ENCODE measurements at regions of chr5 and their contacts with region 1.

Region 1: DNA sequence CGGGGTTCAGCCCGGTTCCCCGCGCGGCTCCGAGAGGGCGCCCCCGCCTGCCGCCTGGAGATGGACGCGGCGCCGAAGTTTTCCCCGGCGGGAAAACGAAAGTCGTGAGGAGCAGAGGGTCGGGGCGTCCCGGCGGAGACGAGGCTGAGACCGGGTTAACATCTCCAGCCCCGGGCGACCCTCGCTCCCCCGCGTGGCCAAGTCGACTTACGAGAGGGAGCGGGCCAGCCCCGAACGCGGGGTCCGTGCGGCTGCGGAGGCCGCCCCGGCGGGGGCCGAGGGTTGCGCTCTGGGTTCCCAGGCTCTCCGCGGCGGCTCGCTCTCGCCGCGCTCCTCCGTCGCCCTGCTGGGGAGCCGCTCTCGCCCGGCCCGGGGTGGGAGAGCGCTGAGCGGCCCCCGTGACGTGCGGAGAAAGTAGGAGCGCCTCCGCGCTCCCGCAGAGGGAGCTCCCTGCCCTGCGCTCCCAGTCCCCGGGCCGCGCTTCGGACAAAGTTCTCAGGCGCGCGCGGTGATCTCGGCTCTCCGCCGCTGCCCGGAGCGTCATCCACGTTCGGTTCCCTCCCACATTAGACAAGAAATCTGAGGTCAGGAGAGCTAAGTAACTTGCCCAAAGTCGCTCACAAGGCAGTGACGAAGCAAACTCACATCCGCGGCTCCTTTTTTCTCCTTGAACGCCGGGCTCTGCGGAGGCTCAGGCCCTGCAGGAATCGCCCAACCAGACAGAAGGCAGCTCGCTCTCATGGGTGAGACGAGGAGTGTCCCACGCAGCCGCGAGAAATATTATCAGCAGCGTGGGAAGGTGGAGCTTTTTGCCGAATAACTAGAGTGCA is 1.2 kb upstream of the GCNT4 start:
- DNase-seq: peak; percentile 43
- H3K4me3 Mint-ChIP-seq: peak overlapping the region; percentile 86
- H3K27ac Mint-ChIP-seq: peak overlapping the region; percentile 75
- H3K4me1 Mint-ChIP-seq: peaks cover 58% of the 10 kb centered on the region
- H3K27me3 Mint-ChIP-seq: peaks cover 19% of the 10 kb centered on the region

Region 2: DNA sequence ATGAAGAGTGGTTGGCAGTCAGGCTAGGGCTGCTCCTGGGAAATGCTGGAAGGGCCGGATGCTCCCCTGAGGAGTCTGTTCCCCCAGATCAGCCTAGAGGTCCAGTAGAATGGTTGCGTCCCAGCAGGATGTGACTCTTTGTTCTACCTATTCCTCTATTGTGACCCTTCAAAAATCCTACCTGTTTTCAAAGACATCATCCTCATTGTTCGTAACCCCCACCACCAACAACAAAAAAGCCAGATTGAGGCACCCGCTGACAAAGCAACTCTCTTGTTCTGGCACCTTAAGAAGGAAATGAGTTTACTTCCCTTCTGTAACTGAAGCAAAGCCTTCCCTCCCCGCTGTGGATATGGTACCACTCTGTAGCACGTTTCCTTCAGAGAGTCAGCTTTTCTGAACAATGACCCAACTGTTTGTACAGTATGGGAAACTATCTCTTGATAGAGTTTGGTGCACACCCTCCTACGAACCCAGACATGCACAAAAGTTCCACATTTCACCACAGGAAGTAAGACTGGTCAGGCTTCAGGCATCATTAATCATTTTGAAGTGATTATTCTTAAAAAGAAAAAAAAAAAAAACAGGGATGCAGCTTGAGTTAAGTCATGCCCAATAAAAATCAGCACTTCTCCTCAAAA is 620.1 kb before region 1 on chr5:
- intact Hi-C with region 1: no loop called
- DNase-seq: no peak
- H3K4me3 Mint-ChIP-seq: no peak overlapping the region
- H3K27ac Mint-ChIP-seq: no peak overlapping the region
- H3K4me1 Mint-ChIP-seq: no peaks in the 10 kb centered on the region
- H3K27me3 Mint-ChIP-seq: peaks cover 9% of the 10 kb centered on the region

Region 3: GRCh38 chr5:74684900-74685851 is 368.3 kb before region 1 on chr5 and contains the start of gene HEXB:
- intact Hi-C with region 1: loop called (anchors 10 kb)
- DNase-seq: peak; percentile 83
- H3K4me3 Mint-ChIP-seq: peak within 1 kb of the TSS; percentile 90
- H3K27ac Mint-ChIP-seq: peak within 1 kb of the TSS; percentile 71
- H3K4me1 Mint-ChIP-seq: peaks cover 23% of the 10 kb centered on the region
- H3K27me3 Mint-ChIP-seq: peaks cover 14% of the 10 kb centered on the region
- total RNA-seq, gene HEXB: 62.7 and 71.4 TPM in 2 replicates

Region 4: GRCh38 chr5:74934949-74935751 is 118.4 kb before region 1 on chr5:
- intact Hi-C with region 1: loop called (anchors 1 kb)
- DNase-seq: peak; percentile 29
- H3K4me3 Mint-ChIP-seq: peak overlapping the region; percentile 50
- H3K27ac Mint-ChIP-seq: peak overlapping the region; percentile 42
- H3K4me1 Mint-ChIP-seq: peaks cover 38% of the 10 kb centered on the region
- H3K27me3 Mint-ChIP-seq: peaks cover 2% of the 10 kb centered on the region

Region 5: GRCh38 chr5:75236322-75237316 is 183.1 kb after region 1 on chr5 and contains the start of gene ANKRD31:
- intact Hi-C with region 1: loop called (anchors 1 kb)
- DNase-seq: peak; percentile 86
- H3K4me3 Mint-ChIP-seq: peak within 1 kb of the TSS; percentile 90
- H3K27ac Mint-ChIP-seq: peak within 1 kb of the TSS; percentile 97
- H3K4me1 Mint-ChIP-seq: peaks cover 15% of the 10 kb centered on the region
- H3K27me3 Mint-ChIP-seq: peaks cover 6% of the 10 kb centered on the region
- total RNA-seq, gene ANKRD31: 0.36 and 0.37 TPM in 2 replicates

Region 6: DNA sequence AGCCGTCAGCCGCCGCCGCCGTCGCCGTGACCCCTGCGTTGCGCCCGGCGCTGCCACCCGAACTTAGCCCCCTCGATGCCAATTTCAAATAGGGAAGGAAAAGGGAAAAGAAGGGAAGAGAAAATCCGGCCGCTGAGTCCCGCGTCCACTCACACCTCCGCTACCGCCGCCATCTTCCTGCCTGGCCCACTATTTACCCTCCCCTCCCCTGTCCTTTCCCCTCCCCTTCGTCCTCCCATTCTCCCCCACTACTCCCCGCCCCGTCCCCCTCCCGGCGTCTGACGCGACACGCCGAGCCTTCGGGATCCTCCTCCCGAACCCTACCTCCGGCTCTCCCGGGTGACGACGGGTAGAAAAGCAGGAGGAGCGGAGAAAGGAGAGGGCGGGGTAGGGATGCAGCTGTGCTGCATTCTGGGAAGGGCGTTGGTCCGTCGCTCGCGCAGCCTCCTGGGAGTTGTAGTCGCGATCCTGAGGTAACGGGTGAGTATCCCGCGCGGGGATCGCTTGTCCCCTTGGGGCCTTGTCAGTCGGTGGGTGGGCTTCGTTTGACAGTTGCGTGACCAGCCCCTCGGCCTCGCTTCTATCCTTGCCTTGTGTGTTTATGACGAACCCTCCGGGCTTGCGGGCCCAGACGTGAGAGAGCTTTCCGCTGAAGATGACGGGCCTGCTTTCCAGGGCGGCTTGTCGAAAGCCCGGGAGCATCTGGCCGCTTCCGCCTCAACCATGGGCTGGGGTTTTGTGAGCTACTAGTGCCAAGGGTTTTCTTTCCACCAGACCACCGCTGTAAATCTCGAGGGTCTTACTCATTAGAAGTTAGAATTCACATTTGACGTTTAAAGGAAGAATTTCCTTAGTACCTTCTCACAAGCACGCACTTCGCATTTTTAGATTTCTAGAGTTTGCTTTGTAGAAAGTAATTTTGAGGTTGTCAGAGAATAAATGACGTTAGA is 458.2 kb after region 1 on chr5 and contains the starts of genes CERT1 and POLK:
- intact Hi-C with region 1: loop called (anchors 5 kb)
- DNase-seq: peak; percentile 96
- H3K4me3 Mint-ChIP-seq: peak within 1 kb of the TSS; percentile 99
- H3K27ac Mint-ChIP-seq: peak within 1 kb of the TSS; percentile 93
- H3K4me1 Mint-ChIP-seq: peaks cover 62% of the 10 kb centered on the region
- H3K27me3 Mint-ChIP-seq: no peaks in the 10 kb centered on the region
- total RNA-seq, gene CERT1: 41.0 and 43.4 TPM in 2 replicates
- total RNA-seq, gene POLK: 38.0 and 40.4 TPM in 2 replicates

Region 7: DNA sequence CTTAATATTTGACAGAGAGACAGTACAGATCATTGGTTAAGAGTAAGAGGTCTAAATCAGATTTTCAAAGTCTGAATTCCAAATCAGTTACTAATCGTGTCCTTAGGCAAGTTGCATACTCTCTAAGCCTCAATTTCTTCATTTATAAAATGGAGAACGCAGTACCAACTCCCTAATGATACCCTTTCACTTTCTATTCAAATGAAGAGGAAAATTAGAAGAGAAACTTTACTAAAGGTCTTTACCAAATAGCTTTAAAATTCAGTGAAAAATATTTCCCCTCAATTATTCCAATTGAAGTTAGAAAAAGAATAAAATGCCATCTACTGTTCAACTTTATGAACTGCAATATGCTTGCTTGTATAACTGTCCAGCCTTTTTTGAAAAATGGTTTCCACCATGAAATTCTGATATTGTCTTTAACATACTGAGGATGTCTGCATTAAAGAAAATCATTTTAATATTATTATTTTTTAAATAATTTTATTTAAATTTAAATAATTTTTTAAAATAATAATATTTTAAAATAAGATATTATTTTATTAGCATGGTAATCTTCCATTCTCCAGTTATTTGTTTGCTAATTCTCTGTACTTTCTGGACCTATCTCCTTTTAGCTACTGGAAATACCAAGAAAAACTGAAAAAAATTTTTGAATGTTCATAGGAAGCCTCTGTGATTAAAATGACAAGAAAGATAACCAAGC is 627.8 kb after region 1 on chr5:
- intact Hi-C with region 1: loop called (anchors 1 kb)
- DNase-seq: no peak
- H3K4me3 Mint-ChIP-seq: no peak overlapping the region
- H3K27ac Mint-ChIP-seq: no peak overlapping the region
- H3K4me1 Mint-ChIP-seq: peaks cover 11% of the 10 kb centered on the region
- H3K27me3 Mint-ChIP-seq: no peaks in the 10 kb centered on the region